Activated CD4-positive, alpha-beta T cell treated with anti-CD3 and anti-CD28 coated beads for 36 hours (primary cell): ENCODE measurements at regions of chr20 and their contacts with region 1.

Region 1: DNA sequence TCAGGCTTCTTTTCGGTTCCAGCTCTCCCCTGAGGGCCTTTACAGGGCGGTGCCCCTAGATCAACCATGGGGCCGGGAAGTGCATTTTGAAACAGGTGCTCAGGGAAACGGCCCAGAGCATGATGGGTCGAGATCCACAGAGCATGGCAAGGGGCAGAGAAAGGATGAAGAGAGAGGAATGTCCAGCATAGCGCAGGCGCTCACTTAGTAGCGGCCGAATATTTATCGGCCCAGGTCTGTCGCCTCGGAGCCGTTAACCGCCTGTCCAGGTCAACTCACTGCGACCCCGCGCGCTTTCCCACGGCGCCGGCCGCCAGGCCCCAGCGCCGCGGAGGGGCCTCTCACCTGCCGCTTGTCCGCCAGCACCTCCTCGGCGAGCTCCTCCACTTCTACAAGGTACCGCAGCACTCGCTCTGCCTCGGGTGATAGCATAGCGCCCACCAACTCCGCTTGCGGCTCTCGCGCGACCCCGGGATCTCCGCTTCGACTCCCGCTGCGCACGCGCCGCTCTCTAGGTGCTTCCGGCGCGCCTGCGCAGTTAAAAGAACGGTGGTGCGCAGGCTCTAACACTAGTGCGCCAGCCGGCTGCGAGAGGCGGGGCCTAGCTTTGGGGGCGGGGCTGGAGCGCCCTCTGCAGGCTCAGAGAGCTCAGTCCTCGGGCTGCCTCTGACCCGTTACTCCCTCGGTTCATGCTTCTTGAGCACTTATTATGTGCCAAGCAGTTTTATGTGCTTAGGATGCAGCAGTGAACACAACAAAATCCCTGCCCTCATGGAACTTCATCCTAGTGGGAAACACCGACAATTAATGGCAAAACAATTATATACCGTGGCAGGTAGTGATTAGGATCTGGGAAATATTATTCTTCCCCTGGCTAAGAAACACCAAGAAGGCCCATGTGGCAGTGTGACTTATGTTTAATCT is at the start of gene PDRG1:
- DNase-seq: peak; percentile 98
- ATAC-seq: peak; percentile 99
- H3K4me3 Mint-ChIP-seq: peak within 1 kb of the TSS; percentile 97
- H3K27ac Mint-ChIP-seq: peak within 1 kb of the TSS; percentile 95
- H3K4me1 Mint-ChIP-seq: peaks cover 26% of the 10 kb centered on the region
- H3K27me3 Mint-ChIP-seq: peaks cover 5% of the 10 kb centered on the region
- total RNA-seq, gene PDRG1: 12.8 to 18.4 TPM

Region 2: DNA sequence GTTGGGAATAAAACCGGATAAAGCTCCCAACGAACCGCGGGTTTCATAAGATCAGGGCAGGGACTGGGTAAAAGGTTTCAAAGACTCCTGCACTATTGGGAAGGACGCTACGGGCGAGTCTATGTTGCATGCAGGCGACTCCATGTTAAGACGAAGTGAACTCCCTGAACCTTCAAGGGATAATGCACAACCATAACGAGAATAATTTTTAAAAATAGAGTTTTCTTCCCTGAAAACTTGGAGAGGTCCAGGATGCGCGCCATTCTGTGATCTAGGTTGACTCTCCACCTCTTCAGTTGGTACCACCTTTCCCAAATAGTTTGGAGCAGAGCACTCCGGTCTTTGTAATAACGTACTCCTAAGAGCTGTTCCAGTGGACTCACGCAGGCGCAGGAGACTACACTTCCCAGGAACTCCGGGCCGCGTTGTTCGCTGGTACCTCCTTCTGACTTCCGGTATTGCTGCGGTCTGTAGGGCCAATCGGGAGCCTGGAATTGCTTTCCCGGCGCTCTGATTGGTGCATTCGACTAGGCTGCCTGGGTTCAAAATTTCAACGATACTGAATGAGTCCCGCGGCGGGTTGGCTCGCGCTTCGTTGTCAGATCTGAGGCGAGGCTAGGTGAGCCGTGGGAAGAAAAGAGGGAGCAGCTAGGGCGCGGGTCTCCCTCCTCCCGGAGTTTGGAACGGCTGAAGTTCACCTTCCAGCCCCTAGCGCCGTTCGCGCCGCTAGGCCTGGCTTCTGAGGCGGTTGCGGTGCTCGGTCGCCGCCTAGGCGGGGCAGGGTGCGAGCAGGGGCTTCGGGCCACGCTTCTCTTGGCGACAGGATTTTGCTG is 212.8 kb before region 1 on chr20 and contains the start of gene TPX2:
- CTCF ChIA-PET with region 1: interaction called, 3 read pairs
- POLR2A ChIA-PET with region 1: no interaction called
- intact Hi-C with region 1: loop called in 1 of 2 experiments (anchors 1 kb)
- DNase-seq: peak; percentile 92
- ATAC-seq: peak; percentile 97
- H3K4me3 Mint-ChIP-seq: no peak within 1 kb of the TSS
- H3K27ac Mint-ChIP-seq: no peak within 1 kb of the TSS
- H3K4me1 Mint-ChIP-seq: peaks cover 2% of the 10 kb centered on the region
- H3K27me3 Mint-ChIP-seq: no peaks in the 10 kb centered on the region
- total RNA-seq, gene TPX2: 137 to 179 TPM

Region 3: DNA sequence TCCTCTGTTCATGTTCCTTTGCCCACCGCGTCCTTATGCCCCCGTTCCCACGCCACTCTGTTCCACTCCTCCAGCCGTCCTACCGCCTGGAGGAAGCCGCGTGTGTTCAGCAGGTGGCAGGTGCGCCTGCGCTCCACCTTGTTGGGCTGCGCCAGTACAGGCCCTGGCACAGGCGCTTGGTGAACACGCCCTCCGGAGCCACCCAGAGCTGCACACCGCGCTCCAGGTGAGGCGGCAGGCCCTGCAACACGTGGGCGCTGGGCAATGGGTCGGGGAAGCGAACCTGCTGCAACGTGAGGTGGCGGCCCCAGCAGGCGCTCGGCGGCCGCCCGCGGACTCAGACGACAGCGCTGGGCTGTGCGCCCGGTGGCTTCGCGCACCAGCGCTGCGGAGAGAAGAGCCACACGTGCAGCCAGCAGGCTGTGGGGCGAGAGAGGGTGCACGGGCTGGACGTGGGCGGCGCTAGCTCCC is 102.3 kb before region 1 on chr20:
- CTCF ChIA-PET with region 1: interaction called, 47 read pairs
- POLR2A ChIA-PET with region 1: no interaction called
- intact Hi-C with region 1: loop called (anchors 1 kb)
- DNase-seq: no peak
- ATAC-seq: no peak
- H3K4me3 Mint-ChIP-seq: no peak overlapping the region
- H3K27ac Mint-ChIP-seq: no peak overlapping the region
- H3K4me1 Mint-ChIP-seq: no peaks in the 10 kb centered on the region
- H3K27me3 Mint-ChIP-seq: peaks cover 15% of the 10 kb centered on the region

Region 4: DNA sequence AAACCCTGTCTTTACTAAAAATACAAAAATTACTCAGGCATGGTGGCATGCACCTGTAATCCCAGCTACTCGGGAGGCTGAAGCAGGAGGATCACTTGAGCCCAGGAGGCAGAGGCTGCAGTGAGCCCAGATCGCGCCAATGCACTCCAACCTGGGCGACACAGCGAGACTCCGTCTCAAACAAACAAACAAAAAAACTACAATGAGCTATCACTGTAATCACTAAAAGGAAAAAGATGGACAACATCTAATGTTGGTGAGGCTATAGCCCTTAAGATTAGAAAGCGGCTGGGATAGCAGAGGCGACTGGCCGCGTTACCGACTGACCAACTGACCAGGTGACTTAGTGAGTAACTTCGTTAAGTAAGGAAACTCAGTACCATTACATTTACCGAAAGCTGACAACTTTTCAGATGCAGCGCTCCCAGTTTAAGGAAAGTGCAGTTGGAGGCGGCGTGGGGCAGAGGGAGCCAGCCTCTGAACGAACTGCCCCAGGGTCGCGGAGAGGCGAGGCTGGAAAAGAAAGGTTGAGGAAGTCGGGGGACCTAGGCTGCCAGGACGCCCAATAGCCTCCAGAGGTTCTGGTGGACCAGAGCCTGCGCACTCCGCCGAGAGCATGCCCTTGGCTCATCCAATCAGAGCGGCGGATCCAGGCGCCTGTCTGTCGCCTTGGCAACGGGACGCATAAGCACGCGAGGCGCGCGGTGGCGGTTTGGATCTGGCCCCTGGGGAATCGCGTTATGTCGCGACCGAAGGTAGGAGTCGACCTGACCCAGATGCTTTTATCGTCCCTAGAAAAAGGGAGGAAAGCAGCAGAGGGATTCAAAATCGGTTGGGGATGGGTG is 72.4 kb before region 1 on chr20:
- CTCF ChIA-PET with region 1: interaction called, 17 read pairs
- POLR2A ChIA-PET with region 1: interaction called, 3 read pairs
- intact Hi-C with region 1: loop called in 1 of 2 experiments (anchors 1 kb)
- DNase-seq: peak; percentile 90
- ATAC-seq: peak; percentile 94
- H3K4me3 Mint-ChIP-seq: peak overlapping the region; percentile 84
- H3K27ac Mint-ChIP-seq: peak overlapping the region; percentile 45
- H3K4me1 Mint-ChIP-seq: peaks cover 8% of the 10 kb centered on the region
- H3K27me3 Mint-ChIP-seq: no peaks in the 10 kb centered on the region

Region 5: GRCh38 chr20:32018269-32019074 is 66.7 kb after region 1 on chr20:
- CTCF ChIA-PET with region 1: no interaction called
- POLR2A ChIA-PET with region 1: no interaction called
- intact Hi-C with region 1: loop called in 1 of 2 experiments (anchors 1 kb)
- DNase-seq: peak; percentile 64
- ATAC-seq: peak; percentile 52
- H3K4me3 Mint-ChIP-seq: peak overlapping the region; percentile 60
- H3K27ac Mint-ChIP-seq: no peak overlapping the region
- H3K4me1 Mint-ChIP-seq: peaks cover 21% of the 10 kb centered on the region
- H3K27me3 Mint-ChIP-seq: peaks cover 55% of the 10 kb centered on the region

Region 6: GRCh38 chr20:32168184-32168905 is 216.6 kb after region 1 on chr20:
- CTCF ChIA-PET with region 1: no interaction called
- POLR2A ChIA-PET with region 1: no interaction called
- intact Hi-C with region 1: no loop called
- DNase-seq: no peak
- ATAC-seq: no peak
- H3K4me3 Mint-ChIP-seq: no peak overlapping the region
- H3K27ac Mint-ChIP-seq: no peak overlapping the region
- H3K4me1 Mint-ChIP-seq: no peaks in the 10 kb centered on the region
- H3K27me3 Mint-ChIP-seq: no peaks in the 10 kb centered on the region